Aorta (tissue), 5 donors: ENCODE measurements at regions of chr4 and their contacts with region 1.

Region 1: DNA sequence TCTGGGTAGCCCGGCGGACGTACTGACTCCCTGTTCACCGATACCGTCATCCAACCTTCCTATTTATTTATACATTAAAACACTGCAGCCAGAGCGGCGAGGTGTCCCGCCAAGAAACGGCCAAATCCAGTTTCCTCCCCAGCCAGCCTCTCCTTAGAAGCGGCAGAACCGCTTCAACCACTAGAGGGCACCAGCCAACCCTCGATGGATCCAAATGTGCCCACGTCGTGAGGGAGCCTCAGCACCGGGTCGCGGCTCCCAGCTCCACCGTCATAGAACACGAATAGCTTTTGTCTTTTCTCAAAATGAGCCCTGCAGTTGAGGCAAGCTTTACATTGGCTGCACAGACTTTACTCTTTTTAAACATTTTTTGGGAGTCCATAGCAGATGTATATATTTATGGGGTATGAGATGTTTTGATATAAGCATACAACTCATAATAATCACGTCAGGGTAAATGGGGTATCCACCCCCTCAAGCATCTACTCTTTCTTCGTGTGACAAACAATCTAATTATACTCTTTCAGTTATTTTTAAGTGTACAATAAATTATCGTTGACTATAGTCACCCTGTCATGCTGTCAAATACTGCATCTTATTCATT is 13.0 kb upstream of the HELT start:
- DNase-seq: peak; percentile 91 to 94
- ATAC-seq: peak; percentile 90
- H3K4me3 ChIP-seq: no peak overlapping the region
- H3K27ac ChIP-seq: no peak overlapping the region
- H3K4me1 ChIP-seq: no peaks in the 10 kb centered on the region
- H3K27me3 ChIP-seq: no peaks in the 10 kb centered on the region

Region 2: DNA sequence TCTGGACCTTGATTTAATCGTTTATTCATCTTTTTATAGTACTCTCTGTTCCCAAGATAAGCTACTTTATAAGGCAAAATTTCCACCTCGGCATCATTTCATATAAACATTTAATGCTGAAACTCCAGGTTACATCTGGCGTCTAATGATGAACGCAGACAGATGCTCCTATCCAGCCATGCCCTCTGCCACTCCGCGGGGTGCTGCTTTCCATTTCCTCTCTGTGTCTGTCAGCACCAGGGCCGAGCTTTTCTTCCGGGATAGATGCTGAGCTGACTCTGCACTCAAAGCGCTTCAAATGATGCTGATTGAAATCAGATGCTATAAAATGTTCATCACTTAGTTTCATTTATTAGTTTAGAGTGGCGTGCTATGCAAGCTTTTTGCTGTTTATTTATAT is 67.6 kb before region 1 on chr4:
- intact Hi-C with region 1: no loop called
- DNase-seq: no peak
- ATAC-seq: no peak
- H3K4me3 ChIP-seq: no peak overlapping the region
- H3K27ac ChIP-seq: no peak overlapping the region
- H3K4me1 ChIP-seq: no peaks in the 10 kb centered on the region
- H3K27me3 ChIP-seq: no peaks in the 10 kb centered on the region

Region 3: DNA sequence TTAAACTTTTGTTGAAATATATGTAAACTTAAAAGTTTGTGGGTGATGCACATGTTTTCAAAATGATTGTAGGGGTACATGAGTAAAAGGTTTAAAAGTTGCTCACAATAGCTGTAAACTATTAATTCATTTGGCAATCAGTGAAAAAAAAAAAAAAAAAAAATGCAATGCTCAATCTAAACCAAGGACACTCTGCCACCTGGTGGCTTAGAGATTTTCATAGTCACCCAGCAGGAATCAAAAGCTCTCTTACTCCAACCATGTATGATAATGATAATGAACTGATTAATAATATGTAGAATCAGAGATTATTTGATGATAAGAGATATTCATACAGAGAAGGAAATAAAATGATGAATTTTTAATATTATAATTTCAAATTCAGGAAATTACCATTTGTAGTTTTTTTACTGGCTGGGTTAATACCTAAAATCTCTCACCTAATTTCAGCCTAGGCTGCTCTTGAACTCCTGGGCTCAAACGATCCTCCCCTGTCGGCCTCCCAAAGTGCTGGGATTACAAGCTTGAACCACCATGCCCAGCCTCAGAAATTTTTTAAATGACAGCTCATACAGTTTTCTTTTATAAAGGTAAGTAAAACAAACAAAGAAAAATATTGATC is 90.8 kb after region 1 on chr4:
- intact Hi-C with region 1: loop called in 1 of 2 experiments (anchors 10 kb)
- DNase-seq: no peak
- ATAC-seq: no peak
- H3K4me3 ChIP-seq: no peak overlapping the region
- H3K27ac ChIP-seq: no peak overlapping the region
- H3K4me1 ChIP-seq: no peaks in the 10 kb centered on the region
- H3K27me3 ChIP-seq: no peaks in the 10 kb centered on the region

Region 4: GRCh38 chr4:185115827-185116232 is 110.5 kb after region 1 on chr4:
- intact Hi-C with region 1: no loop called
- DNase-seq: peak; percentile 55 to 74
- ATAC-seq: no peak
- H3K4me3 ChIP-seq: no peak overlapping the region
- H3K27ac ChIP-seq: no peak overlapping the region
- H3K4me1 ChIP-seq: peaks cover 0 to 3% of the 10 kb centered on the region in 2 donors
- H3K27me3 ChIP-seq: no peaks in the 10 kb centered on the region